ENCODE measurements at regions of chr10 and their contacts with region 1.

Region 1: GRCh38 chr10:88990384-88991160 is at the start of gene FAS:
- DNase-seq: peak; percentile 95
- H3K4me3 Mint-ChIP-seq: peak within 1 kb of the TSS; percentile 86
- H3K27ac Mint-ChIP-seq: peak within 1 kb of the TSS; percentile 93
- H3K4me1 Mint-ChIP-seq: peaks cover 23% of the 10 kb centered on the region
- H3K27me3 Mint-ChIP-seq: no peaks in the 10 kb centered on the region
- CTCF ChIP-seq: no peak
- total RNA-seq, gene FAS: 55.6 and 60.2 TPM in 2 replicates

Region 2: GRCh38 chr10:88091490-88092105 is 899.0 kb before region 1 on chr10:
- CTCF ChIA-PET with region 1: no interaction called
- POLR2A ChIA-PET with region 1: no interaction called
- intact Hi-C with region 1: no loop called
- DNase-seq: peak; percentile 80
- H3K4me3 Mint-ChIP-seq: no peak overlapping the region
- H3K27ac Mint-ChIP-seq: peak overlapping the region; percentile 63
- H3K4me1 Mint-ChIP-seq: peaks cover 66% of the 10 kb centered on the region
- H3K27me3 Mint-ChIP-seq: no peaks in the 10 kb centered on the region
- CTCF ChIP-seq: no peak

Region 3: GRCh38 chr10:88944813-88945212 is 45.8 kb before region 1 on chr10:
- CTCF ChIA-PET with region 1: interaction called, 16 read pairs
- POLR2A ChIA-PET with region 1: interaction called, 12 read pairs
- intact Hi-C with region 1: no loop called
- DNase-seq: no peak
- H3K4me3 Mint-ChIP-seq: no peak overlapping the region
- H3K27ac Mint-ChIP-seq: no peak overlapping the region
- H3K4me1 Mint-ChIP-seq: no peaks in the 10 kb centered on the region
- H3K27me3 Mint-ChIP-seq: no peaks in the 10 kb centered on the region
- CTCF ChIP-seq: no peak

Region 4: DNA sequence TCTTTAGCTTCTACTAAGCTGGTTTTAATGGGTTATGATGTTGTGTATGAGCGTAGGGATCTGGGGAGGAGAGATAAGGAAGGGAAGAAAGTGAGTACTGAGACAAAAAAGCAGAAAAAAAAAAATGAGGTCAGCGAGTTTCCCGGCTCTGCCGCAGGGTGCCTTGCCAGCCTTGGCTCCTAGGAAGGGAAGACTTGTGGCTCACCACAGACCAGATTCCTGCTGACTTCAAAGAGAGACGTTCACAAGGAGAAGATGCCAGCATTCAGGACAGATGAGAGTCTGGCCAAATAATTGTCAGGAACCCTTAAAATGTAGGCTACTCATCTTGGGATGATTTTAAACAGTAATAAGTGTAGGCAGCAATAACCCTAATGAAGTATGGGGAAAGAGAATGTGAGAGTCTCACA is 11.4 kb before region 1 on chr10:
- CTCF ChIA-PET with region 1: interaction called, 9 read pairs
- POLR2A ChIA-PET with region 1: interaction called, 72 read pairs
- intact Hi-C with region 1: no loop called
- DNase-seq: peak; percentile 67
- H3K4me3 Mint-ChIP-seq: no peak overlapping the region
- H3K27ac Mint-ChIP-seq: peak overlapping the region; percentile 68
- H3K4me1 Mint-ChIP-seq: peaks cover 14% of the 10 kb centered on the region
- H3K27me3 Mint-ChIP-seq: no peaks in the 10 kb centered on the region
- CTCF ChIP-seq: no peak

Region 5: GRCh38 chr10:89007129-89007893 is 16.7 kb after region 1 on chr10:
- CTCF ChIA-PET with region 1: interaction called, 5 read pairs
- POLR2A ChIA-PET with region 1: interaction called, 41 read pairs
- intact Hi-C with region 1: no loop called
- DNase-seq: no peak
- H3K4me3 Mint-ChIP-seq: no peak overlapping the region
- H3K27ac Mint-ChIP-seq: peak overlapping the region; percentile 32
- H3K4me1 Mint-ChIP-seq: no peaks in the 10 kb centered on the region
- H3K27me3 Mint-ChIP-seq: no peaks in the 10 kb centered on the region
- CTCF ChIP-seq: no peak

Region 6: GRCh38 chr10:89029785-89030437 is 39.3 kb after region 1 on chr10:
- CTCF ChIA-PET with region 1: interaction called, 13 read pairs
- POLR2A ChIA-PET with region 1: interaction called, 11 read pairs
- intact Hi-C with region 1: no loop called
- DNase-seq: peak; percentile 81
- H3K4me3 Mint-ChIP-seq: no peak overlapping the region
- H3K27ac Mint-ChIP-seq: no peak overlapping the region
- H3K4me1 Mint-ChIP-seq: peaks cover 30% of the 10 kb centered on the region
- H3K27me3 Mint-ChIP-seq: no peaks in the 10 kb centered on the region
- CTCF ChIP-seq: peak; percentile 79

Region 7: GRCh38 chr10:89251409-89252224 is 261.0 kb after region 1 on chr10 and contains the start of gene LIPA:
- CTCF ChIA-PET with region 1: interaction called, 4 read pairs
- POLR2A ChIA-PET with region 1: interaction called, 12 read pairs
- intact Hi-C with region 1: no loop called
- DNase-seq: peak; percentile 98
- H3K4me3 Mint-ChIP-seq: peak within 1 kb of the TSS; percentile 92
- H3K27ac Mint-ChIP-seq: peak within 1 kb of the TSS; percentile 52
- H3K4me1 Mint-ChIP-seq: peaks cover 16% of the 10 kb centered on the region
- H3K27me3 Mint-ChIP-seq: no peaks in the 10 kb centered on the region
- CTCF ChIP-seq: no peak
- total RNA-seq, gene LIPA: 18.5 and 22.3 TPM in 2 replicates